ENCODE measurements at regions of chr6 and their contacts with region 1.

Region 1: DNA sequence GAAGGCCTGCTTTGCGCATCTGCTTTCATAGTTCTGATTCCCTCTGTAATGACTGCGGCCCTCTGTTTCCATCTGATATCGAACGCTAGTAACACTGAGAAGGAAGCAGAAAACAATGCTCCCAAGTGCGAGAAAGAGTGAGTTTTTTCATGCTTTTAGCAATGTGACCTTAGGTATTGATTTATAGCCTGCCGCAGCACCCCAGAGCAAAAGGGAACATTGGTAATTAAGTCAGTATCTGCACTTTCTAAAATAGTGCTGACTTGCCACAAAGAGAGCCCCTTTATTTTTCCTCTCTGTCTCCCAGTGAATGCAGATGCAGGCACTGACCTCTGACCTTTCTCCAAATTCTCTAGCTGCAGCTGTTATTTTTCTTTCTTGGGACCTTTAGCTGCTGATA is 129.8 kb downstream of the HDGFL1 start:
- DNase-seq: no peak
- ATAC-seq: no peak
- H3K4me3 ChIP-seq: no peak overlapping the region
- H3K27ac ChIP-seq: no peak overlapping the region
- H3K4me1 ChIP-seq: no peaks in the 10 kb centered on the region
- H3K27me3 ChIP-seq: no peaks in the 10 kb centered on the region
- CTCF ChIP-seq: no peak

Region 2: DNA sequence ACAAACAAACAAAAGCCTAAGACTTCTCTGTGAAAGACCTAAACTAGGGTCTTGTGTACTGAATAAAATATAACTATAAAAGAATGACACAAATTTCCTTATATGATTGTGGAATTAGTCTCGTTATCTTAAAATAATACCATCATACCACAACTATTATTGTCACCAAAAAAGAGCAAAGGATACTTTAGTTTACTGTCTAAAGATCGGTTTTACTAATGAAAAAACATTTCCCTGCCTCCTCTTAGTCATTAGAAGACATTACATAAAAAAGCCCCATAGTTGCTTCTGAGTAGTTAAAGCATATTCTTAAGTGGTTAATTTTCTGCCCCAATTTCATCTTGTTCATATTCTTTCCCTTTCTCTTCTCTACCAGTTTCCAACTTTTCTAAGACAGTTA is 435.4 kb before region 1 on chr6:
- intact Hi-C with region 1: no loop called
- DNase-seq: no peak
- ATAC-seq: no peak
- H3K4me3 ChIP-seq: no peak overlapping the region
- H3K27ac ChIP-seq: no peak overlapping the region
- H3K4me1 ChIP-seq: no peaks in the 10 kb centered on the region
- H3K27me3 ChIP-seq: no peaks in the 10 kb centered on the region
- CTCF ChIP-seq: no peak

Region 3: GRCh38 chr6:22613695-22614094 is 85.5 kb before region 1 on chr6:
- intact Hi-C with region 1: no loop called
- DNase-seq: no peak
- ATAC-seq: no peak
- H3K4me3 ChIP-seq: no peak overlapping the region
- H3K27ac ChIP-seq: no peak overlapping the region
- H3K4me1 ChIP-seq: peaks cover 5% of the 10 kb centered on the region
- H3K27me3 ChIP-seq: no peaks in the 10 kb centered on the region
- CTCF ChIP-seq: no peak

Region 4: GRCh38 chr6:22722913-22723312 is 23.8 kb after region 1 on chr6:
- intact Hi-C with region 1: loop called in 1 of 2 experiments (anchors 1 kb)
- DNase-seq: no peak
- ATAC-seq: no peak
- H3K4me3 ChIP-seq: no peak overlapping the region
- H3K27ac ChIP-seq: no peak overlapping the region
- H3K4me1 ChIP-seq: no peaks in the 10 kb centered on the region
- H3K27me3 ChIP-seq: no peaks in the 10 kb centered on the region
- CTCF ChIP-seq: no peak

Measured in psoas muscle (tissue), 8 donors.